ENCODE measurements at regions of chr20 and their contacts with region 1.

Region 1: GRCh38 chr20:38893565-38894090 is 32.6 kb upstream of the FAM83D start:
- DNase-seq: peak; percentile 86
- H3K4me3 Mint-ChIP-seq: peak overlapping the region; percentile 41
- H3K27ac Mint-ChIP-seq: no peak overlapping the region
- H3K4me1 Mint-ChIP-seq: peaks cover 13% of the 10 kb centered on the region
- H3K27me3 Mint-ChIP-seq: peaks cover 69% of the 10 kb centered on the region
- CTCF ChIP-seq: peak; percentile 99

Region 2: GRCh38 chr20:38645980-38646858 is 247.4 kb before region 1 on chr20:
- CTCF ChIA-PET with region 1: interaction called, 4 read pairs
- intact Hi-C with region 1: loop called (anchors 1 kb)
- DNase-seq: peak; percentile 95
- H3K4me3 Mint-ChIP-seq: peak overlapping the region; percentile 59
- H3K27ac Mint-ChIP-seq: no peak overlapping the region
- H3K4me1 Mint-ChIP-seq: no peaks in the 10 kb centered on the region
- H3K27me3 Mint-ChIP-seq: no peaks in the 10 kb centered on the region
- CTCF ChIP-seq: peak; percentile 99

Region 3: DNA sequence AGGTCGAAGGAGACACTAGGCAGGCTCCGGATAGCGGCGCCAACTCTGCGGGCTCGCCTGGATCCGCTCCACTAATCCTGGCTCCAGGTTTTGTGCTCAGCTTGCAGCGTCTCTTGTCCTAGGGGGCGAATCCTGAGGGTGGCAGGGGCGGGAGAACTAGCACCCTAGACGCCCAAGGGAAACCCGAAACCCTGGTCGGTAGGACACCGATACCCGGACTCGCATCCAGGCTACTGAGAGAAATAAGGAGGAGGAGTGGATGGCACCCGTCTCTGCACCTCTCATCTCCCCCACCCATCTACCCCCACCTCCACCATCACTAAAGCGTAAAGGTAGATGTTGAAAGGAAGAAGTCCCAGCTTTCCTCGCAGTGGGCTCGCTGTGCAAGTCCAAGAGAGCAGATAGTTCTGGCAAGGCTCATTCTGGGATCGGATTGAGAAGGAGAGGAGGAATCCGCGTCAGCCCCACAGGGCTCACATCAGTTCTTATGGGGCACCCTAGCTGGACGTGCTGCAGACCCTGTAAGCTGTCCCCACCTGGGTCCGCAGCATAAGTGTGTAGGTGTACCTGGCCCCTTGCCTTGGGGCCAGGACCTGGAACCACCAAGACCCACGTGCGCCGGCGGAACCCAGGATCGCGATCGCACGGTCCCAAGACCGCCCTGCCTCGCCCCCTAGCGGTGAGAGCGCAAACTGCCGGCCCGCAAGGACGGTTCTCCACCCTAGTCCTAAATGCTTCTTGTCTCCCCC is 162.5 kb before region 1 on chr20:
- CTCF ChIA-PET with region 1: no interaction called
- intact Hi-C with region 1: loop called (anchors 5 kb)
- DNase-seq: peak; percentile 92
- H3K4me3 Mint-ChIP-seq: peak overlapping the region; percentile 58
- H3K27ac Mint-ChIP-seq: no peak overlapping the region
- H3K4me1 Mint-ChIP-seq: peaks cover 22% of the 10 kb centered on the region
- H3K27me3 Mint-ChIP-seq: peaks cover 100% of the 10 kb centered on the region
- CTCF ChIP-seq: peak; percentile 100

Region 4: DNA sequence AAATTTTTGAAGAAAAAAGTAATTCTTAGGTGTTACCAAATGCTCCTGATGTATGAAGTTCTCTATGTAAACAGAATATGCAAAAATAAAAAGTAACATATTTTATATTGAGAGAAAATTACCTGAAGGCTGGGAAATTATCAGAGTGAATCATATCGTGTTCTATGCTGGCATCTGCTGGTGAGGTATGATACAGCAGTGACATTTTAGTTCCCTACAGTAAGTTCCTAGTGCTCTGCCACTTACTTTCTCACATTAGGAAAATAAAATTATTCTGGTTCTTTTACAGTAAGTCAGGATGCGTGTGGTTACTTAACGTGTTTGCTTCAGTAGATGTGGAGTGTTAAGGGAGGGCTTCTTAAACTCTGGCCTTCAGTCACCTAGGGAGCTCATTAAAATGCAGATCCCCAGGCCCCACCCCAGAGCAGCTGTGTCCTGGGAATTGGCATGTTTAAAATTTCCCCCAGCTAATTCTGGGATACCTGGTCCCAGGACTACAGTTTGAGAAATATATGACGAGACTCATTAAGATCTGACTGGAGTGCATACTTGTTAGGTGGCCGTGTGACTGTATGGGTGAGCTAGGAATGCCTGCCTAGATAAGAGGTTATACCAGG is 142.2 kb before region 1 on chr20:
- CTCF ChIA-PET with region 1: no interaction called
- intact Hi-C with region 1: no loop called
- DNase-seq: peak; percentile 52
- H3K4me3 Mint-ChIP-seq: no peak overlapping the region
- H3K27ac Mint-ChIP-seq: no peak overlapping the region
- H3K4me1 Mint-ChIP-seq: peaks cover 21% of the 10 kb centered on the region
- H3K27me3 Mint-ChIP-seq: no peaks in the 10 kb centered on the region
- CTCF ChIP-seq: peak; percentile 57

Region 5: GRCh38 chr20:38863024-38863851 is 30.4 kb before region 1 on chr20:
- CTCF ChIA-PET with region 1: interaction called, 6 read pairs
- intact Hi-C with region 1: loop called (anchors 1 kb)
- DNase-seq: no peak
- H3K4me3 Mint-ChIP-seq: no peak overlapping the region
- H3K27ac Mint-ChIP-seq: no peak overlapping the region
- H3K4me1 Mint-ChIP-seq: peaks cover 8% of the 10 kb centered on the region
- H3K27me3 Mint-ChIP-seq: peaks cover 8% of the 10 kb centered on the region
- CTCF ChIP-seq: no peak

Region 6: DNA sequence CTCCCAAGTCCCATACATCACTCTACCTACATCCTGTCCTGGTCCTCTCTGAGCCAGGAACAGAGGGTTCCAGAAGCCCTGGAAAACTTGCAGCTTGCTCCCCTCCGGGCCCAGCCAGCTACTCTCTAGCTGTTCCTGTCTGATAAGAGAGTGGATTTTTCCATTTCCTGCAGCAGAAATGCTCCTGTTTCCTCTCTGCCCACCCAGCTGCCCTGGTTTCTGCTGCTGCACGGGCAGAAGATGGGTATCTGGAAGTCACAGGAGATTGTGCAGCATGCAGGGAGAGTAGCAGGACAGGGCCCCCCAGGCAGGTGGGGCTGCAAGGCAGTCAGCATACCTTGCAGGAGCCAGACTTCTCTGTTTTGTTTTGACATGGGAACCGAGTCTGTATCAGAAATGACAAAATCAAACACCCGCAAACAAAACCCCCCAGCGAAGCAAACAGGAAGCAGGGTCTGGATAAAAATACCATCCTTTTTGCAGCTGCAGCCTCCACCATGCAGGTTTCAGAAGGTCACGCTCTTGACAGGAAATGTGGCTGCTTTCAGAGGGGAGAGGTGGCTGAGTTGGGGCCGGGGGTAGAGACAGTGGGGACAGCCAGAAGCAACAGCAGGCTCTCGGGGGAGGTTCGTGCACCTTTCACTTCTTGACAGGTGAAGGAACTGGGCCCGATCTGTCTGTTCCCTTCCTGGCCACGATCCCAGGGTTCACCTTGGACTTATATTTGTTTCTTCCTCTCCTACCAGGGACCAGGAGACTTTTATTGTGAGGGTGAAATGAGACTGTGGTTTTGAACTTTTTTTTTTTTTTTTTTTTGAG is 18.2 kb before region 1 on chr20:
- CTCF ChIA-PET with region 1: interaction called, 13 read pairs
- intact Hi-C with region 1: no loop called
- DNase-seq: no peak
- H3K4me3 Mint-ChIP-seq: no peak overlapping the region
- H3K27ac Mint-ChIP-seq: no peak overlapping the region
- H3K4me1 Mint-ChIP-seq: peaks cover 22% of the 10 kb centered on the region
- H3K27me3 Mint-ChIP-seq: peaks cover 28% of the 10 kb centered on the region
- CTCF ChIP-seq: no peak

Region 7: GRCh38 chr20:38985603-38986170 is 92.1 kb after region 1 on chr20:
- CTCF ChIA-PET with region 1: no interaction called
- intact Hi-C with region 1: no loop called
- DNase-seq: peak; percentile 16
- H3K4me3 Mint-ChIP-seq: peak overlapping the region; percentile 4
- H3K27ac Mint-ChIP-seq: peak overlapping the region; percentile 27
- H3K4me1 Mint-ChIP-seq: peaks cover 41% of the 10 kb centered on the region
- H3K27me3 Mint-ChIP-seq: no peaks in the 10 kb centered on the region
- CTCF ChIP-seq: no peak